SK-N-SH (cell line): ENCODE measurements at regions of chr13 and their contacts with region 1.

Region 1: DNA sequence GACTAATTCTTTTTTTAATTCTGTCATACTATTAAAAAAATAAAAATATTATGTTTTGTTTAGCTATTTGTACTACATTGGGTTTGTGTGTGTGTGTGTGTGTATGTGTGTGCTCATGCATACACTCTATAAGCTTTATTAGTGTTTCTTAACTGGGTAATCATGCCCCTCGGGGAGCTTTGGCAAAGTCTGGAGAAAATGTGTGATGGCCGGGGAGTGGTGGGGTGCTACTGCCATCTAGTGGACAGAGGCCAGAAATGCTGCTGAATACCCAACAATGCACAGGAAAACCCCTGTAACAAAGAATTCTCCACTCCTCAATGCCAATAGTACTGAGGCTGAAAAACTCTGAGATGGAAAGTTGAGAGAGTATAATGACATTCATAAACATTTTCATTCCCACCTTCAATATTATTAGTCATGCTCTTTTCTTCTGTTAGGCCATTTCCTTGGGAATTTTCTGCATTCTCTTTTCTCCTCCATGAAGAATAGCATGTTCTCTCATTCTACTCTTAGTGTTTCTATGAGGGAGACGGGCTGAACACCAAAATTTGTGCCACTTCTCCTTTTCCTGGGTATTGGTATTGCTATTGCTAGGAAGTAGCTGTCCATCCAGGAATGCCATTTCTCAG is 157.3 kb downstream of the DNAJC3 start:
- DNase-seq: peak; percentile 69
- H3K4me3 ChIP-seq: no peak overlapping the region; a peak in 1 of 4 replicates
- H3K27ac ChIP-seq: no peak overlapping the region
- H3K4me1 ChIP-seq: peaks cover 2 to 5% of the 10 kb centered on the region in 2 experiments; a peak in 2 of 4 replicates
- H3K27me3 ChIP-seq: no peaks in the 10 kb centered on the region
- CTCF ChIP-seq: peak; percentile 95
- EP300 ChIP-seq: peak in 1 of 2 experiments; percentile 42; a peak in 1 of 4 replicates
- RAD21 ChIP-seq: peak; percentile 98

Region 2: DNA sequence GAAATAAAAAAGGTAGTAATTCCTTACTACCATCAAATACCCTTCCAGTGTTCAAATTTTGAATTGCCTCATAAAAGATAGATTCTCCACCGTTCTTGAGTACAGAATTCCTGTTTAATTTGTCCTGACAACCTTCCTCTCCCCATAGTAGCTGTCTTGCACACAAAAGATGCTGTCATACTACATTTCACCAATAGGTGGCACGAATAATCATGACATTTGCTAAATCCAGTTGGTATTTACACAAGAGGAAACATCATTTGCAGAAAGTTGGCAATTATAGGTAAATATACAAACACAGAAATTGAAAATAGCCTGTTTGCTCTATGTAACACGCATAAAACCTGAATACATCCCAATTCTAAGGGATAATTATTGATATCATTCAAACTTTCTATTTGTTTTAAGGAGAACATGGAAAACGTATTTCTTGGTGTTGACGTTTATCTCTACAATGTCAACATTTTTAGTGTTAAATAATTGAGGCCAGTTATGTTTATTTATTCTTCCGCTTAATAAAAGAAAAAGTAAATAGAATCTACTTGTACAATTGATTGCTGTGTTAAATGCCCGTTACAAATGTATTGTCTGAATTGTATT is 340.1 kb before region 1 on chr13:
- CTCF ChIA-PET with region 1: interaction called, 13 read pairs
- POLR2A ChIA-PET with region 1: no interaction called
- DNase-seq: peak; percentile 62
- H3K4me3 ChIP-seq: no peak overlapping the region; a peak in 1 of 4 replicates
- H3K27ac ChIP-seq: no peak overlapping the region
- H3K4me1 ChIP-seq: peaks cover 0 to 4% of the 10 kb centered on the region in 2 experiments; a peak in 1 of 4 replicates
- H3K27me3 ChIP-seq: no peaks in the 10 kb centered on the region
- CTCF ChIP-seq: peak; percentile 76
- EP300 ChIP-seq: no peak
- RAD21 ChIP-seq: peak; percentile 67

Region 3: GRCh38 chr13:95624020-95624419 is 210.2 kb before region 1 on chr13:
- CTCF ChIA-PET with region 1: interaction called, 57 read pairs
- POLR2A ChIA-PET with region 1: interaction called, 4 read pairs
- DNase-seq: peak; percentile 52
- H3K4me3 ChIP-seq: no peak overlapping the region
- H3K27ac ChIP-seq: no peak overlapping the region
- H3K4me1 ChIP-seq: no peaks in the 10 kb centered on the region
- H3K27me3 ChIP-seq: no peaks in the 10 kb centered on the region
- CTCF ChIP-seq: peak; percentile 80
- EP300 ChIP-seq: no peak
- RAD21 ChIP-seq: peak; percentile 88

Region 4: DNA sequence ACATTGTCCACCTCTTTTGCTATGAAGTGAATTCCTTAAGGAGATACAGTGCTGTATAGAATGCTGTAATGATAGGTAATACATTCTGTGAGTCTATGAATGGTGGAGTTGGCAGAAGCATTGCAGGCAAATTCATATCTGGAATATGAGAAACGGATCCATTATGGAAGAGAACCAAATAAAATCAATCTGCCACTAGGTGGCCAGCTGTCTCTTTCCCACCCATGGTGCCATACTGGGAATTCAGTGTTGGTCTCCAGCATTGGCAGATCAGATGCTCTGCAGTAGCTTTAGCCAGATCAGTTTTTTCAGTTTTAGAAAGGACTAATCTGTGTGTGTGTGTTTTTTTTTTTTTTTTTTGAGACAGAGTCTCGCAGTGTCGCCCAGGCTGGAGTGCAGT is 129.7 kb before region 1 on chr13:
- CTCF ChIA-PET with region 1: interaction called, 13 read pairs
- POLR2A ChIA-PET with region 1: no interaction called
- DNase-seq: peak; percentile 42
- H3K4me3 ChIP-seq: no peak overlapping the region
- H3K27ac ChIP-seq: no peak overlapping the region
- H3K4me1 ChIP-seq: no peaks in the 10 kb centered on the region
- H3K27me3 ChIP-seq: no peaks in the 10 kb centered on the region
- CTCF ChIP-seq: peak; percentile 41
- EP300 ChIP-seq: no peak
- RAD21 ChIP-seq: peak; percentile 52

Region 5: DNA sequence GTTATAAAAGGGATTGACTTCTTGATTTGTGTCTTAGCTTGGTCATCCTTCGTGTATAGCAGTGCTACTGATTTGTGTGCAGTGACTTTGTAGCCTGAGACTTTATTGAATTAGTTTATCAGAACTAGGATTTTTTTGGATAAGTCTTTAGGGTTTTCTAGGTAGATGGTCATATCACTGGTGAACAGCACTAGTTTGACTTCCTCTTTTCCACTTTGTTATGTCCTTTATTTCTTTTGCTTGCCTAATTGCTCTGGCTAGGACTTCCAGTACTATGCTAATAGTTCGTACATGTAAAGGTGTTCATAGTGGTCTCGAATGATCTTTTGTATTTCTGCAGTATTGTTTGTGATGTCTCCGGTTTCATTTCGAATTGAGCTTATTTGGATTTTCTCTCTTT is 11.9 kb before region 1 on chr13:
- CTCF ChIA-PET with region 1: interaction called, 36 read pairs
- POLR2A ChIA-PET with region 1: no interaction called
- DNase-seq: no peak
- H3K4me3 ChIP-seq: no peak overlapping the region
- H3K27ac ChIP-seq: no peak overlapping the region
- H3K4me1 ChIP-seq: no peaks in the 10 kb centered on the region
- H3K27me3 ChIP-seq: no peaks in the 10 kb centered on the region
- CTCF ChIP-seq: no peak
- EP300 ChIP-seq: no peak
- RAD21 ChIP-seq: no peak